OCI-LY7 (cell line): ENCODE measurements at regions of chr6 and their contacts with region 1.

Region 1: GRCh38 chr6:122839477-122839876 is 50.4 kb downstream of the SMPDL3A start:
- DNase-seq: peak; percentile 41
- H3K4me3 ChIP-seq: no peak overlapping the region
- H3K27ac ChIP-seq: no peak overlapping the region
- H3K4me1 ChIP-seq: no peaks in the 10 kb centered on the region
- CTCF ChIP-seq: peak; percentile 79

Region 2: GRCh38 chr6:122491919-122492555 is 347.4 kb before region 1 on chr6:
- CTCF ChIA-PET with region 1: interaction called, 3 read pairs
- POLR2A ChIA-PET with region 1: no interaction called
- intact Hi-C with region 1: loop called (anchors 5 kb)
- DNase-seq: peak; percentile 63
- H3K4me3 ChIP-seq: no peak overlapping the region
- H3K27ac ChIP-seq: no peak overlapping the region
- H3K4me1 ChIP-seq: no peaks in the 10 kb centered on the region
- CTCF ChIP-seq: peak; percentile 96